PC-3 (cell line): ENCODE measurements at regions of chr1 and their contacts with region 1.

Region 1: DNA sequence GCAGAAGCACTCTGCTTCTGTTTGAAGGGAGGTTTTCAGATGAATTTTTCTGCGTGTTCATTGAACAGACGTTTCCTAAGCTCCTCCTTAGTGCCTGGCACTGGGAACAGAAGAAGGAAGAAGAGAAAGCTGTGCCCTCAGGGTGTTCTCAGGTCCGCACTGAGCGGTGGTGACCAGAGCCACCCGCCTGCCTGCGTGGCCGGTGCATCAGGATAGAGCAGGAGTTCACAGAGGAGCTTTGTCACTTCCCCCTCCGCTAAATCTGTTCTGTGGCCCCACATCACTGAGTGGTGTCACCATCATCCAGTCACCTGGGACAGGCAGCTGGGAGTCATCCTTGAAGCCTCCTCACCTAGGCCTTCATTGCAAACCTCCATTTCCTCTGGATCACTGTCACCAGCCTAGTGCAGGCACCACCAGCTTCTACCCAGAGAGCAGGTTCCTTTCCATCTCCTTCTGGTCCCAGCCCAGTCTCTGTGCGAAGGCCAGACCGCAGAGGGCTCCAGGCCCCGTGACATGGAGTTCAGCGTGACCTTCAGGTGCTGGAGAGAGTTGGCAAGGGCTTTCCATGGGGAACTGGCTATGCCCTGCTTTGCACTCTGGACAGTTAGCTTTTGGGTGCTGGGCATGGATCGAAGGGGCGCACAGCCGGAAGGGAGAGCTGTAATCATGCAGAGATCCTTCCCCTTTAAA is 21.7 kb downstream of the PARK7 start:
- DNase-seq: no peak
- ATAC-seq: no peak
- H3K4me3 ChIP-seq: no peak overlapping the region
- H3K27ac ChIP-seq: peak overlapping the region; percentile 33; the same call in 1 of the 2 replicates
- H3K4me1 ChIP-seq: peaks cover 3% of the 10 kb centered on the region; the same call in 1 of the 2 replicates
- H3K27me3 ChIP-seq: no peaks in the 10 kb centered on the region
- CTCF ChIP-seq: no peak

Region 2: GRCh38 chr1:7667625-7668218 is 315.5 kb before region 1 on chr1:
- CTCF ChIA-PET with region 1: no interaction called
- POLR2A ChIA-PET with region 1: no interaction called
- intact Hi-C with region 1: no loop called
- DNase-seq: peak; percentile 88
- ATAC-seq: peak; percentile 88
- H3K4me3 ChIP-seq: no peak overlapping the region
- H3K27ac ChIP-seq: no peak overlapping the region
- H3K4me1 ChIP-seq: no peaks in the 10 kb centered on the region
- H3K27me3 ChIP-seq: no peaks in the 10 kb centered on the region
- CTCF ChIP-seq: peak; percentile 97

Region 3: GRCh38 chr1:8006037-8006963 is 23.1 kb after region 1 on chr1:
- CTCF ChIA-PET with region 1: no interaction called
- POLR2A ChIA-PET with region 1: interaction called, 3 read pairs
- intact Hi-C with region 1: loop called (anchors 2 kb)
- DNase-seq: peak; percentile 70
- ATAC-seq: peak; percentile 9
- H3K4me3 ChIP-seq: no peak overlapping the region
- H3K27ac ChIP-seq: peak overlapping the region; percentile 53
- H3K4me1 ChIP-seq: peaks cover 42% of the 10 kb centered on the region
- H3K27me3 ChIP-seq: no peaks in the 10 kb centered on the region
- CTCF ChIP-seq: no peak

Region 4: DNA sequence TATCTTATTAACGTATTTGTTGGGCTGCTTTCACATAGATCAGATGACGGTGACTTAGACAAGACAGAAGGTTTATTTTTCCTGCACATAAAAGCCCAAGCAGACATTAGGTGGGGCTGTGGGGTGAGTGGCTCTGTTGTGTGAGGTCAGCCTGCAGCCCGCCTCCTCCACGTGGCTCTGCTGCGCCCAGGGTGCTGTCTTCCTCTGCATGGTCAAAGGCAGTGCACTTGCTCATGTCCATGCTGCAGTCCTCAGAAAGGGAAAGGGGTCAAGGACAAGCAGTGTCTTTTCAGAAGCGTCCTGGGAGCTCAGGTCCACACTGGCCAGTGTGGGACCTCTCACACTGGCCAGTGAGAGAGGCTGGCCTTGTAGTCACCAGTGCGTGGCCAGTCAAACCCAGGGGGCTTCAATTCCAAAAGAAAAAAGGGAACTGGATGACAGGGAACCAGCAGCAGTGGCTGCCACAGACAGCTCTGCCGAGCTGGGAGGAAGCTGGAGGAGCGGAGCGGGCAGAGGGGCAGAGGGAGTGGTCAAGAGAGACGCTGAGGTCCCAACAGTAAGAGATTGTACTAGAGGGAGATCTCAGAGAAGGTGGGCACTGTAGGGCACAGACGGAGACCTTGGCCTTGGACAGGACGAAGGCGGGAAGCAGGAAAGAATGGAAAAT is 298.7 kb after region 1 on chr1:
- CTCF ChIA-PET with region 1: no interaction called
- POLR2A ChIA-PET with region 1: interaction called, 12 read pairs
- intact Hi-C with region 1: no loop called
- DNase-seq: no peak
- ATAC-seq: no peak
- H3K4me3 ChIP-seq: no peak overlapping the region
- H3K27ac ChIP-seq: no peak overlapping the region
- H3K4me1 ChIP-seq: peaks cover 27% of the 10 kb centered on the region
- H3K27me3 ChIP-seq: no peaks in the 10 kb centered on the region
- CTCF ChIP-seq: no peak

Region 5: GRCh38 chr1:8314346-8315280 is 331.4 kb after region 1 on chr1:
- CTCF ChIA-PET with region 1: no interaction called
- POLR2A ChIA-PET with region 1: no interaction called
- intact Hi-C with region 1: loop called (anchors 1 kb)
- DNase-seq: peak; percentile 90
- ATAC-seq: peak; percentile 79
- H3K4me3 ChIP-seq: no peak overlapping the region
- H3K27ac ChIP-seq: peak overlapping the region; percentile 62
- H3K4me1 ChIP-seq: peaks cover 29% of the 10 kb centered on the region
- H3K27me3 ChIP-seq: no peaks in the 10 kb centered on the region
- CTCF ChIP-seq: peak; percentile 91

Region 6: DNA sequence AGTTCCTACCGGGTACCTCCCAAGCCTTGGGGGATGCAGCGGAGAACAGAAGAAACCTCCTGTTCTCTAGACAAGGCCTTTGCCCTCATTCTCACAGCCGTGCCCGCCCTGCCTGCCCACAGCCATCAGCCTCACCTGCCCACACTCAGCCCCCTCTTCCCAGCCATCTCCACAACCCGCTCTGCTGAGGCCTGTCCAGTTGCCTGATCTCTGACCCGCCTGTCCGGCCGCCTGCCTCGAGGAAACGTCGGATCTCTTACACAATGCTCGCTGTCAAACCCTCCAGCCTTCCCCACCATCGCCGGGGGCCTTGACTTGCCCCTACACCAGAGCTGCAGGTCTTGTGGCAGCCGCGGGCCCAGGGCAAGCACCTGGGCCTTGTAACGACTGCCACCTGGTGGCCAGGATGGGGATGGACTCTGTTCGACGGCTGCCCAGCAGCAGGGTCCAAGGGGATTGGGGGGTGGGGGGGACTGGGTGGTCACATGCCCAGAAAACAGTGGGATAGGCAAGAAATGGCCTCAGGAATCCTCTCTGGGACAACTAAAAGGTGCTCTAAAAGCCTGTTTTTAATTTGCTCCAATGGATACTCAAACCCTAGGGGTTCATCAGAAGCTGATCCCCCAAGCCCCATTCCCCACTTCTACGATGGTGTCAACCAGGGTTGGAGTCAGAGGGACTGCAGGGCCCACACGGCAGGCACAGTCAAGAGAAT is 365.7 kb after region 1 on chr1:
- CTCF ChIA-PET with region 1: no interaction called
- POLR2A ChIA-PET with region 1: no interaction called
- intact Hi-C with region 1: loop called (anchors 1 kb)
- DNase-seq: peak; percentile 68
- ATAC-seq: peak; percentile 71
- H3K4me3 ChIP-seq: no peak overlapping the region
- H3K27ac ChIP-seq: no peak overlapping the region
- H3K4me1 ChIP-seq: peaks cover 4% of the 10 kb centered on the region
- H3K27me3 ChIP-seq: no peaks in the 10 kb centered on the region
- CTCF ChIP-seq: peak; percentile 90